Posterior cingulate gyrus (tissue), 11 donors: ENCODE measurements at regions of chr13 and their contacts with region 1.

Region 1: DNA sequence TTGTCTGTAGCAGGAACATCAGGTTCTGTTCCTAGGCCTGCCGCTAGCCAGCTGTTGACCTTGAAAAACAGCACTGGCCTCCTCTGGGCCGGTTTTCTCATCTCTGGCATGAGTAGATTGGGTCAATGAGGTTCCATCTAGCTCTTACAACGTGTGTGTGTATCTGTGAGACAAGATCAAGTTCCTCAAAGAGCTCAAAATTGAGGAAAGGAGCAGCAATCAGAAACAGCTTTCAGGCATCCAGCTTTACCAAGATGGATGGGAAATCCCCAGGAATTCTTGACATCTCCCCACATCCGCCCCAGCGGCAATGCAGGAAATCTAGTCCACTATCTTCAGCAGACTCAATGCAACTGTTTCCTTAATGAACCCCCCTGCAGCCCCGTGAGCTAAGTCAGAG is 4.9 kb downstream of the FLT1 start:
- DNase-seq: no peak

Region 2: GRCh38 chr13:28473044-28473443 is 17.0 kb before region 1 on chr13:
- intact Hi-C with region 1: loop called (anchors 2 kb)
- DNase-seq: no peak

Region 3: DNA sequence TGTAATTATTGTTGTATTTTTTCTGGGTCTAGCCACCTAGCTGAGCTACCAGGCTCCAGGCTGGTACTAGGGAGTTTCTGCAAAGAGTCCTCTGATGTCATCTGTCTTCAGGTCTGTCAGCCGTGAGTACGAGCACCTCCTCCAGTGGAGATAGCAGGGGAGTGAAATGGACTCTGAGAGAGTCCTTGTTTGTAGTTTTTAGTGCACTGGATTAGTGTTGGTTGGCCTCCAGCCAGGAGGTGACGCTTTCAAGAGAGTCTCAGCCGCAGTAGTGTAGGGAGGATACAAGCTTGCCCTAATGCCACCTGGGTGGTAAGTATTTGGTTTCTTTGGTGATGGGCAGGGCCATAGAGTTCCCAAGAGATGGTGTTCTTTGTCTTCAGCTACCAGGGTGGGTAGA is 720.6 kb after region 1 on chr13:
- intact Hi-C with region 1: no loop called
- DNase-seq: peak in 1 of 10 donors; percentile 17